Caco-2 (cell line): ENCODE measurements at regions of chr7 and their contacts with region 1.

Region 1: GRCh38 chr7:83547498-83548253 is 101.3 kb downstream of the SEMA3E start:
- DNase-seq: no peak
- H3K4me3 ChIP-seq: no peak overlapping the region
- H3K4me3 Mint-ChIP-seq: no peak overlapping the region
- H3K27ac Mint-ChIP-seq: no peak overlapping the region
- H3K4me1 ChIP-seq: peaks cover 6% of the 10 kb centered on the region; the same call in 1 of the 2 replicates
- H3K4me1 Mint-ChIP-seq: peaks cover 7% of the 10 kb centered on the region
- H3K27me3 ChIP-seq: no peaks in the 10 kb centered on the region
- H3K27me3 Mint-ChIP-seq: no peaks in the 10 kb centered on the region
- CTCF ChIP-seq: no peak

Region 2: GRCh38 chr7:83524286-83525075 is 23.2 kb before region 1 on chr7:
- CTCF ChIA-PET with region 1: no interaction called
- POLR2A ChIA-PET with region 1: no interaction called
- intact Hi-C with region 1: loop called (anchors 1 kb)
- DNase-seq: no peak
- H3K4me3 ChIP-seq: no peak overlapping the region
- H3K4me3 Mint-ChIP-seq: peak overlapping the region; percentile 25
- H3K27ac Mint-ChIP-seq: peak overlapping the region; percentile 69
- H3K4me1 ChIP-seq: peaks cover 30% of the 10 kb centered on the region
- H3K4me1 Mint-ChIP-seq: peaks cover 9% of the 10 kb centered on the region
- H3K27me3 ChIP-seq: no peaks in the 10 kb centered on the region
- H3K27me3 Mint-ChIP-seq: no peaks in the 10 kb centered on the region
- CTCF ChIP-seq: no peak